Esophagus squamous epithelium (tissue), 5 donors: ENCODE measurements at regions of chr4 and their contacts with region 1.

Region 1: GRCh38 chr4:47836641-47837093 is 1.2 kb downstream of the CORIN start:
- DNase-seq: peak; percentile 1
- H3K4me3 ChIP-seq: peak overlapping the region; percentile 38 to 71 (median 49)
- H3K27ac ChIP-seq: no peak overlapping the region
- H3K4me1 ChIP-seq: peaks cover 17 to 35% (median 20%) of the 10 kb centered on the region in 3 donors
- H3K27me3 ChIP-seq: peaks cover 0 to 12% (median under 1%) of the 10 kb centered on the region in 4 donors
- CTCF ChIP-seq: peak; percentile 28 to 70 (median 53)
- POLR2A ChIP-seq: no peak

Region 2: GRCh38 chr4:47510036-47510435 is 326.6 kb before region 1 on chr4:
- intact Hi-C with region 1: no loop called
- DNase-seq: no peak
- H3K4me3 ChIP-seq: no peak overlapping the region
- H3K27ac ChIP-seq: peak overlapping the region in 1 of 4 donors; percentile 10
- H3K4me1 ChIP-seq: peaks cover 0 to 13% (median 8%) of the 10 kb centered on the region in 3 donors
- H3K27me3 ChIP-seq: no peaks in the 10 kb centered on the region
- CTCF ChIP-seq: no peak
- POLR2A ChIP-seq: no peak

Region 3: DNA sequence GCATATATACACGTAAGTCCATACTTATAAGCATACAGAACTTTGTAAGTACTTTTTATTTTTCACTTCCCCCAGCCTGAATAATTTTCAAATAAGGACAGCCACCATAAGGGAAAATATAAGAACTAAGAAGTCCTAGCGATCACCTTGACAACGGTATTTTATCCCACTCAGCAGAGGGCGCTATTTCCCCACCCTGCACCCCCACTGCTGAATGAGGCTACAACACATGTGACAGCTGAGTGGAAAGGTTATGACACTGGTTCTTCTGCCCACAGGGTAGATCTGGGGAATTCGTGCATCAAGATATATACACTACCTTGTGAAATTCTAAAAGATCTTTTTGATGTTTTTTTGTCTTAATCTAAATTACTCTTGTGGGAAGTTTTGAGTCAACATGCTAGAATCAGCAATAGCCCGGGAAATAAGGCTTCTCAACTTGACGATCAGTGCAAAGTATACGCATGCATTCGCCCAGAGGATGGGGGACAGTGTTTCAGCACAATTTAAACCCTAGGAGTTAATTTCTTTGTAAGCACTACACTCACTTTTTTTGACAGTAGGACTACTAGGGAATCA is 150.3 kb before region 1 on chr4:
- intact Hi-C with region 1: loop called (anchors 10 kb)
- DNase-seq: no peak
- H3K4me3 ChIP-seq: no peak overlapping the region
- H3K27ac ChIP-seq: no peak overlapping the region
- H3K4me1 ChIP-seq: no peaks in the 10 kb centered on the region
- H3K27me3 ChIP-seq: no peaks in the 10 kb centered on the region
- CTCF ChIP-seq: peak; percentile 23 to 63 (median 43)
- POLR2A ChIP-seq: no peak